AG04450 (cell line): ENCODE measurements at regions of chr22 and their contacts with region 1.

Region 1: DNA sequence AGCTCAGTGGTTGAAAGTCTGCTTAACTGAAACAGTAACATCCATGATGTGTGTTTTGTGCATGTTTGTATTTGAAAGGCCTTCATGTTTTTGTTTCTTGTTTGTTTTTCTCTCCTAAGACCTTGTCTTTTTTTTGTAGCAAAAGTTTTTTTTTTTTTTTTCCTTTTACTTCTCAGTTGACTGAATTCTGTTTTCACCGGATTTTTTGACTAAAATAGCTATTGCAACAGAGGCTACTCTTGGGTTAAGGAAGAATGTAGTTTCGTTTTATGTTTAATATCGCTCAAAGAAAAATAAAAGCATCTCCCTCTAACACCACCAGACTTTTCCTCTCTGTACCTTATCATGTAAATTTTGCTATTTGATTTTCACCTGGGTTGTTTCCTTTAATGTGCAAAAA is 15.1 kb downstream of the APOL6 start:
- DNase-seq: no peak
- H3K4me3 ChIP-seq: no peak overlapping the region
- H3K27ac ChIP-seq: no peak overlapping the region
- H3K27me3 ChIP-seq: no peaks in the 10 kb centered on the region
- CTCF ChIP-seq: no peak

Region 2: GRCh38 chr22:35561796-35562526 is 101.4 kb before region 1 on chr22:
- CTCF ChIA-PET with region 1: no interaction called
- POLR2A ChIA-PET with region 1: no interaction called
- DNase-seq: peak; percentile 38
- H3K4me3 ChIP-seq: no peak overlapping the region
- H3K27ac ChIP-seq: no peak overlapping the region
- H3K27me3 ChIP-seq: peaks cover 3% of the 10 kb centered on the region
- CTCF ChIP-seq: no peak

Region 3: GRCh38 chr22:35684270-35684700 is 20.9 kb after region 1 on chr22:
- CTCF ChIA-PET with region 1: interaction called, 22 read pairs
- POLR2A ChIA-PET with region 1: interaction called, 3 read pairs
- DNase-seq: no peak
- H3K4me3 ChIP-seq: no peak overlapping the region
- H3K27ac ChIP-seq: no peak overlapping the region
- H3K27me3 ChIP-seq: no peaks in the 10 kb centered on the region
- CTCF ChIP-seq: peak; percentile 51